RWPE1 (cell line): ENCODE measurements at regions of chr18 and their contacts with region 1.

Region 1: DNA sequence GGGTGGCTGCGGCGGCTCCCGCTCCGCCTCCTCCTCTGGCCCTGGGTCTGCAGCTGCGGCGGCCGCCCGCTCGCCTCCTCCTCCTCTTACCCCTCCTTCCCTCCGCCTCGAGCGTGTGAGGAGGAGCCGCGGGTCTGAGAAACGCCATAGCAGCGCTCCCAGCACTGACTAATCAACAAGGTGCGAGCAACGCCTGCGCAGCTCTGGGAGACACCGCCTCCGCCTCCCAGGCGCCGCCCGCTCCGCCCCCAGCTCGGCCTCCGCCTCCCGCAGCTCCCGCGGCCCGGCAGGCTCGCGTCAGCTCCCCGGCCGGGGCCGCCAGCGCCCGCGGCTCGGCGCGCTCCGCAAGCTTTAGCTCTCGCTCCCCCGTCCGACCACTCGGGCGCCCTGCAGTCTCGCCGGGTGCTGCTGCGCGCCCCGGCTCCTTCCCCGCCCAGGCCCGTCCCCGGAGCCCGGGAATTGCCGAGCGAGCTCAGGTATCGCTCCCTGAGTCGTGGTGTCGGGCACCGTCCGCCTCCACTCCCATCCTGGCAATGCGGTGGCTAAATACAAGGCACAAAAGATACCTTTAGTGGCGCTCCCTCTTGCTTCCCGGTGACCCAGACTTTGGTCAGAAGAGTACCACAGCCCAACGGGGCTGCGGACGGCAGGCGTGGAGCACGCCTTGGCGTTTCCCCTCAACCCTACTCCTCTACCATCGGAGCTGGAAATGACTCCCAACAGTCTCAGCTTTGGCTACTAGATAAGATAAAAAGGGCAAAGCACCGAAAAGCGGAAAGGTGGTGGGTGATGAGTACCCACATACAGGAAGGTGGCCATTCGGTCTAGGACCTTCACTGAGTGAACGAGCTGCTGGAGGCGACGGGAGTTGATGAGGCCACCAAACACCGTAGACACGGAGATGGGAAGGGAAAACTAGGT is at the start of gene GAREM1:
- DNase-seq: peak; percentile 76
- H3K27ac ChIP-seq: peak within 1 kb of the TSS; percentile 89
- CTCF ChIP-seq: peak; percentile 89

Region 2: GRCh38 chr18:32158108-32158624 is 312.8 kb before region 1 on chr18:
- CTCF ChIA-PET with region 1: interaction called, 11 read pairs
- POLR2A ChIA-PET with region 1: no interaction called
- DNase-seq: peak; percentile 53
- H3K27ac ChIP-seq: no peak overlapping the region
- CTCF ChIP-seq: peak; percentile 83

Region 3: DNA sequence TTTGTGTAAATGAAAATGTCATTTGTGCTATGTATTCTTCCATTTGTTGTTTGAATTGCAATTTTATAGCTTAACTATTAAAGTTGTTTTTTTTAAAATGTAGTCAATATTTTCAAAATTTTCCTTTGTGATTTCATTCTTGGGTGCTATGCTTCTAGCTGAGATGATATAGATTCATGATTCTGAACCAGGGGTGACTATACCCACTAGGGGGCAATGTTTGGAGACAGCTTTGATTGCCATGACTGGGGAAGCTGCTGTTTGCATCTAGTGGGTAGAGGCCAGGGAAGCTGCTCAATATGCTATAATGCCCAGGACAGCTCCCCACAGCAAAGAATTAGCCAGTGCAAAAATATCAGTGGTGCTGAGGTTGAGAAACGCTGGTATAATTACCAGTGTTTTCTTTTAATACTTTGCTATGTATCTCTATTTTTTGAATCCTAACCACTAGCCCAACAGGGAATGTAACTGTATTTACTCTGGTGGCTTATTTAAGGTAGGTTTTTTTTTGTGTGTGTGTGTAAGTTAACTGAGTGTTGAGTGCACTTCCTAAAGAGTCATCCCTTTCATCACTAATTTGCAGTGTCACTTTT is 181.4 kb before region 1 on chr18:
- CTCF ChIA-PET with region 1: interaction called, 11 read pairs
- POLR2A ChIA-PET with region 1: no interaction called
- DNase-seq: peak; percentile 32
- H3K27ac ChIP-seq: no peak overlapping the region
- CTCF ChIP-seq: peak; percentile 76